Calu3 (cell line): ENCODE measurements at regions of chr12 and their contacts with region 1.

Region 1: GRCh38 chr12:101773650-101774162 is 34.4 kb upstream of the SYCP3 start:
- DNase-seq: peak; percentile 70
- H3K4me3 Mint-ChIP-seq: no peak overlapping the region
- H3K27ac Mint-ChIP-seq: no peak overlapping the region
- H3K4me1 Mint-ChIP-seq: peaks cover 7% of the 10 kb centered on the region
- H3K27me3 Mint-ChIP-seq: no peaks in the 10 kb centered on the region
- CTCF ChIP-seq: peak; percentile 88

Region 2: DNA sequence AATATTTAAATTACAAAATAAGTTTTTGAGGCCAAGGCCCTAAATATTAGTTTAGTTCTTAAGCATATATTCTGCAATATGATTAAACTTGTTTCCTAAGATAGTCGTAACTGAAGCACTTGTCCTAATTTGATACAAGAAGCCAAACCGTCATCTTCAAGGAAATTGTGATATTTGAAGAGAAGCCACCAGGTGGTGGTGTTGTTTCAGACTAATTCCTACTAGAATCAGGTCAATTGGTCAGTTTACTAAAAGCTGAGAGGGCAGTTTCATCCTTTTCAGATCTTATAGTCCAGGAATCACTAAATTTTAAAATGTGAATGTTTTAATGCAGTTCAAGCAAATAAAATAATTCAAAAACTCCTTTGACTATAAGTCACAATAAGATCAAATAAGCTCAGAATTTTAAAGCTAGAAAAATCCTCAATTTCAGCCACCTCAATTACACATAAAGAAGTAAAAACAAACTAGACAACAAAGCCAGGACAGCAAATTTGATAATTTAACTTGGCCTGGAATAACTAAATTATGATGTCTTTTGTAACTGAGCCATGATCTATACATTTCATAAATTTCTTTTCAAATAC is 359.1 kb before region 1 on chr12:
- CTCF ChIA-PET with region 1: no interaction called
- intact Hi-C with region 1: loop called (anchors 1 kb)
- DNase-seq: peak; percentile 71
- H3K4me3 Mint-ChIP-seq: no peak overlapping the region
- H3K27ac Mint-ChIP-seq: no peak overlapping the region
- H3K4me1 Mint-ChIP-seq: no peaks in the 10 kb centered on the region
- H3K27me3 Mint-ChIP-seq: peaks cover 9% of the 10 kb centered on the region
- CTCF ChIP-seq: peak; percentile 45

Region 3: DNA sequence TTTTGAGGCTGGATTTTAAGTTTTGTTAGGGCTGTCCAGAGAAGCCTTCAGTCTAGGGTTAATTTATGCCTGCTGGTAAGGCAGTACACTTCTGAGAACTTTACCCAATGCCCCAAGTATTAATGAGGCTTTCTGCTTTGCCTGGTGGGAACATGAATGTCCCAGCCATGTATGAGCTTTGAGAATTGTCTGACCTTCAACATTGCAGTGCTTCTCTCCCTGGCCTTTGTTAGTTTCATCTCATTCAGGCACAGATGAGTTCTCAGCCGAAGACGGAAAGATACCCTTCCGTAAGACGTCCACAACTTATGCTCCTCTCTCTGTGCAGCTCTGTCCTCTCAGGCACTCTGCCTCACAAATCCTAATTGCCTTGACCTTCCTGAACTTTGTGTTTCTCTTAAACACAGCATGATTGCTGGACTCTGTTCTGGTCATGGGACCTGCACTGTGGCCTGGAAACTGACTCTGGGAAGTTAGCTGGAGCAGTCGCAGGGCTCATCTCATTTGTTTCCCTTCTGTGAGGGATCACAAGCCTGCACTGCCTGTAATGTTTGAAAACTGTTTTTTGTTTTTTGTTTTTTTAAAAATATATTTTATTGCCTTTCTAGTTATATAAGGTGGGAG is 60.5 kb before region 1 on chr12:
- CTCF ChIA-PET with region 1: no interaction called
- intact Hi-C with region 1: no loop called
- DNase-seq: no peak
- H3K4me3 Mint-ChIP-seq: no peak overlapping the region
- H3K27ac Mint-ChIP-seq: no peak overlapping the region
- H3K4me1 Mint-ChIP-seq: peaks cover 7% of the 10 kb centered on the region
- H3K27me3 Mint-ChIP-seq: no peaks in the 10 kb centered on the region
- CTCF ChIP-seq: no peak

Region 4: DNA sequence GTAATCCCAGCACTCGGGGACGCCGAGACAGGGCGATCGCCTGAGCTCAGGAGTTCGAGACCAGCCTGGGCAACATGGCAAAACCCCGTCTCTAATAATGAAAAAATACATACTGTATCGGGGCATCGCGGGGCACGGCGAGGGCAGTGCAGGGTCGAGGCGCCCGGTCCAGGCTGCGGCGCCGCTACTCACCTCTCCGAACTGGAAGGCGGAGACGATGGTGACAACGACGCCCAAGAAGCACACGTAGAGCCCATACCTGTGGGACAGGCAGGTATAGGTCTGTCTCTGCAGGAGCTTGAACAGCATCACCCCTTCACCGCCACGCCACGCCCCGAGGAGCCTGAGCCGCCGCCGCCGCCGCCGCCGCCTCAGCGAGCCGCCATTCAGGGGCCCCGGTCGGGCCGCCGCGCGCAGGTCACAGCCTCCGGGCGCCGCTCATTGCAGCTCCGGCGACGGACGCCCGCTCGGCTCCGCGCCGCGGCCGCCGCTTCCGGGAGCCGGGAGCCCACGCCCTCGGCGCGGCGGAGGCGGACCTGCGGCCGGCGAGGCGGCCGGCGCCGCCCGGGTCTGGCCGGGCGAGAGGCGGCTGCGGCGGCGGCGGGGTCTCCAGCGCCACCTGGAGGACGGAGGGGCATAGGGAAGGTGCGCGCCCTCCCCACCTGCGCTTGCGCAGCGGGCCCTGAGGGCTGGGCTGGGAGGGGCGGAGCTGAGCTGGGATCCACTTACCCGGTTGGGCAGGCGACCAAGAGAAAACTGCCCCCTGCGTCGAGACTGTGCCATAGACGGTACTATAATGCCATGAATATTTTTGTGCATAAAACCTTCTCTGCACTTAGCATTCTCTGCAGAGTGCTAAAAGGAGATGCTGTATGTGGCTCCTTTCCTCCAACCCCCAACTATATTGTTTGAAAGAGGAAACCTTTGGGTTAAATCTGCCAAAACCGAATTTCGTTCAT is 56.9 kb after region 1 on chr12 and contains the start of gene GNPTAB:
- CTCF ChIA-PET with region 1: interaction called, 19 read pairs
- intact Hi-C with region 1: loop called (anchors 2 kb)
- DNase-seq: peak; percentile 97
- H3K4me3 Mint-ChIP-seq: peak within 1 kb of the TSS; percentile 92
- H3K27ac Mint-ChIP-seq: peak within 1 kb of the TSS; percentile 73
- H3K4me1 Mint-ChIP-seq: peaks cover 8% of the 10 kb centered on the region
- H3K27me3 Mint-ChIP-seq: no peaks in the 10 kb centered on the region
- CTCF ChIP-seq: no peak
- total RNA-seq, gene GNPTAB: 34.0 and 36.0 TPM in 2 replicates

Region 5: DNA sequence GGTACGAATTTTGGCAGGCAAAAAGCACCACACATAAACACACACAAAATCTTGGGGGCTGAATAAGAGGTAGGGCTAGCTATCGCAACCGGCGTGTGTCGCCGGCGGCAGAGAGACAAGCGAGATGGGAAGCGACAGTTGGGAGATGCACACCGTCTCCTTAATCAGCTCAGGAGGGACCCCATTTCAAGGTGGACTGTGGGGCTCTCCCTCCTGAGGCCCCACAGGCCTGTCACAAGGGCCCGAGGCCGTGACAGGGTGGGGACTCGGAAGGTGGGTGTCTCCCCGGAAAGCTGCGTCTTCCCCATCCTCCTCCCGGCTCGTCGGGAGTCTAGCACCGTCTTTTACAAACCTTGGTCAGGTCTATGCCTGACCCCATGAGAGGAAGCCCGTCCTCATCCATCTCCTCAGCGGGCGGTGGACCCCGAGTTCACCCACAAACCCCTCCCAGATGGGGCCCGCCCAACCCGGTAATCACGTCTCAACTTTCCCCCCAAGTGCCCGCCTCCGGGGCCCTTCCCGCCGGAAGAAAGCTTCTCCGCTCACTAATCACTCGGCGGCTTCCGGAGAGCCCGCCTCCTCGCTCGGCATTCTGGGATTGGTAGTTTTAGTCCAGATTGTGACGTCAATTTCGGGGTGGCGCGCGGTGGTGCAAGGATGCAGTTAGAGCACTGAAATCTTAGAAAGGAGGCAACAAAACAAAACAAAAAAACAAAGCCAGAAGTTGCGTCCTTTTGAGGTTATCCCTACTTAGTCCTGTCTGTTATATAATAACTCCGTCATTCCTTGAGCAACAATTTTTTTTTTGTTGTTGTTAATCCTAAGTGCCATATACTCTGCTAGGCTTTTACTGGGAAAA is 288.1 kb after region 1 on chr12 and contains the start of gene WASHC3:
- CTCF ChIA-PET with region 1: no interaction called
- intact Hi-C with region 1: loop called (anchors 10 kb)
- DNase-seq: peak; percentile 95
- H3K4me3 Mint-ChIP-seq: peak within 1 kb of the TSS; percentile 90
- H3K27ac Mint-ChIP-seq: peak within 1 kb of the TSS; percentile 71
- H3K4me1 Mint-ChIP-seq: peaks cover 8% of the 10 kb centered on the region
- H3K27me3 Mint-ChIP-seq: no peaks in the 10 kb centered on the region
- CTCF ChIP-seq: no peak
- total RNA-seq, gene WASHC3: 34.3 and 36.0 TPM in 2 replicates

Region 6: GRCh38 chr12:102816816-102817434 is 1043.2 kb after region 1 on chr12:
- CTCF ChIA-PET with region 1: interaction called, 3 read pairs
- intact Hi-C with region 1: loop called (anchors 10 kb)
- DNase-seq: peak; percentile 17
- H3K4me3 Mint-ChIP-seq: no peak overlapping the region
- H3K27ac Mint-ChIP-seq: no peak overlapping the region
- H3K4me1 Mint-ChIP-seq: peaks cover 11% of the 10 kb centered on the region
- H3K27me3 Mint-ChIP-seq: peaks cover 16% of the 10 kb centered on the region
- CTCF ChIP-seq: peak; percentile 68